ENCODE measurements at regions of chr3 and their contacts with region 1.

Region 1: DNA sequence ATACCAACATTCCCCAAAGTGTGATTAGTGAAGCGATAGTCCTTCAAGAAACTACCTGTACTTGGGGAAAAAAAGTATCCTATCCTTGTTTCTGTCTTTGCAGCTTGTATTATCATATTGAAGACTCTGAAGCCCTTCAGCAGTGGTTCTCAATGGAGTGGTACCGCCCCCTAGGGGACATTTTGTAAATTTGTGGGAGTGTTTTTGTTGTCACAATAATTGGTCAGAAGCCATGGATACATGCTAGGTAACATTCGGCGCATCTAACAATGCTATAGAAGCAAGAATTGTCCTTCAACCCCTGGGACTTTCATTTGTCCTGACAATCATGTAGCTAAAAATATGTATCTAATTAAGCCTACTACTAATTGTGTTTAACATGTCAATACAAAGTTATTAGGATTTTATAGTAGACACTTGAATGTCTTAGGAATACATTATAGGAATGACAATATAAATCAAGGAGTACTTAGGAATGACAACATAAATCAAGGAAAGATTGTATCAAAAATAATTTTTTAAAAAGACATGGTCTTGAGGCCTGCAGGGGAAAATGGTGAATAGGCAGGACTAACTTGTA is 53.7 kb downstream of the NMD3 start:
- DNase-seq: no peak
- ATAC-seq: no peak

Region 2: DNA sequence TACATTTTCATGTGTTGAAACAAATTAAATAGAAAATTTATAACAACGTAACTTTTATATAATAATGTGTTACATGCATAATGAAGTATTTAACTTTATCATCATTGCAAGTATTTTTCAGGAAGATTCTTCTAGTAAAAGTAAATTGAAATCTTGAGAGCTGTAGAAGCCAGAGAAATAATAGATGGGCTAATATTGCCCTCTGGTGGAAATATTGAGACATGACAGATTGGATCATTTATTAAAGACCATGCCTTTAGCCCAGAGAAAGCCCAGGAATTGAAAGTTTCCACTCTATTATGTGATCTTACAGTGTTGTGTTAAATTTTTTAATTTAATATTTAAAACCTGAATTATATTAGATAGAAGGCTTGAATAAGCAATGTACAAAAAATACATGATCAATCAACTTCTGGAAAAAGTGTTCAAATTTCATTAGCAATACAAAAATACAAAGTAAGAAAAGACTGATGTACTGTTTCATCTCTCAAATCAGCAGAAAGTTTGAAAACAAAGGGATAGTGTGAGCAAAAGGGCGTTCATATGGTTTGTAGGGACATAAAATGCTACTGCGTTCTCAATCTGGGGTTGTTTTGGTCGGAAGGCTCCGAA is 149.2 kb after region 1 on chr3:
- intact Hi-C with region 1: loop called (anchors 5 kb)
- DNase-seq: no peak
- ATAC-seq: peak; percentile 83

Measured in Right ventricle myocardium superior (tissue), 1 donor.